Natural killer cell (primary cell): ENCODE measurements at regions of chrX and their contacts with region 1.

Region 1: DNA sequence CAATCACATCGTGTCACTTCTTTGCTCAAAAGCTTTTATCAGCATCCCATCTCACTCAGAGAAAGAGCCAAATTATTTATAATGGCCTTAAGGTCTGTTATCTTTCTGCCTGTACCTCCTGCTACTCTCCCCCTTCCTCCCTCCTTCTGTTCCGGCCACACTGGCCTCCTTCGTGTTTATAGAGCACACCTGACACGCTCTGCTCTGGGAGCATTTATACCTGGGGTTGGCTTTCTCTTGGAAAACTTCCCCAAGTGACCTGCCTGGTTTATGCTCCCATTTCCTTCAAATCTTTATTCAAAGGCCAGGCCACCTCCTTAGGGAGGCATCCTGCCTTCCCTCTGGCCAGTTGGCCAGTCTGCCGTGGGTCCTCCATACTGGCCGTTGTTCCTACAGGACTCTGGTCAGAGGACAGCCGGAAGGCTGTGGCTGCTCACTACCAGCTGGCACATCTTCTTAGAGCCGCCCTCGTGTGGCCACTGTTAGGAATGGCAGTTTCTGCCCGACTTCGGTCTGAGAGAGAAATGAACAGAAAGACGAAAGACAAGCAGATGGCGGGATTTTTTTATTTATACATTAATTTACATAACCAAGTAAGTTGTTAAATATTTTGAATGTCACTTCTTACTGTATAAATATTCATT is 80.2 kb upstream of the CBLL2 start:
- DNase-seq: peak; percentile 19 to 60
- ATAC-seq: peak; percentile 50 to 83 (median 64)
- H3K4me3 ChIP-seq: no peak overlapping the region
- H3K4me3 Mint-ChIP-seq: no peak overlapping the region
- H3K27ac ChIP-seq: no peak overlapping the region
- H3K27ac Mint-ChIP-seq: no peak overlapping the region
- H3K4me1 ChIP-seq: peaks cover 4% of the 10 kb centered on the region
- H3K4me1 Mint-ChIP-seq: peaks cover 5% of the 10 kb centered on the region in 2 donors
- H3K27me3 ChIP-seq: peaks cover 2% of the 10 kb centered on the region
- H3K27me3 Mint-ChIP-seq: peaks cover 3 to 6% of the 10 kb centered on the region in 2 donors
- CTCF ChIP-seq: peak; percentile 63

Region 2: DNA sequence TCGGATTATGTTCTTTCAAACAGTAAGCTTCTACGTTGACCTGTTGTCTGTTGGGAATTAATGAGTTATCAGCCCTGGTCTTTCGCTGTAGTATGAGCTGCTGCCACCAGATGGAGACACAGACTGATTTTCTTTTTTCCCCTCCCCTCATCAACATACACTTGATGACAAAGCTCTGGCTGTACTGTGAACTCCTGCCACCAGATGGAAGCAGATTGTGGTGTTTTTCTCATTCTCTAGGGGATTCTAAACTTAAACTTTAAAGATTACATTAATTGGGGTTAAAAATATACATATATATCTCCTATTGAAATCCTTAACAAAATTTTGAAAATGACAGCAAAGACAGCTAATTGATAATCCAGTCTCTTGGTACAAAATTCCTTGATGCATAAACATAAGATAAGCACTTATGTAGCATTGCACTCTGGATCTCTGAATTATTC is 207.2 kb before region 1 on chrX:
- intact Hi-C with region 1: loop called (anchors 1 kb)
- DNase-seq: peak; percentile 48 to 82
- ATAC-seq: peak; percentile 96 to 100 (median 100)
- H3K4me3 ChIP-seq: no peak overlapping the region
- H3K4me3 Mint-ChIP-seq: no peak overlapping the region
- H3K27ac ChIP-seq: no peak overlapping the region
- H3K27ac Mint-ChIP-seq: peak overlapping the region in 1 of 2 donors; percentile 57
- H3K4me1 ChIP-seq: no peaks in the 10 kb centered on the region
- H3K4me1 Mint-ChIP-seq: no peaks in the 10 kb centered on the region
- H3K27me3 ChIP-seq: no peaks in the 10 kb centered on the region
- H3K27me3 Mint-ChIP-seq: no peaks in the 10 kb centered on the region
- CTCF ChIP-seq: peak; percentile 74

Region 3: DNA sequence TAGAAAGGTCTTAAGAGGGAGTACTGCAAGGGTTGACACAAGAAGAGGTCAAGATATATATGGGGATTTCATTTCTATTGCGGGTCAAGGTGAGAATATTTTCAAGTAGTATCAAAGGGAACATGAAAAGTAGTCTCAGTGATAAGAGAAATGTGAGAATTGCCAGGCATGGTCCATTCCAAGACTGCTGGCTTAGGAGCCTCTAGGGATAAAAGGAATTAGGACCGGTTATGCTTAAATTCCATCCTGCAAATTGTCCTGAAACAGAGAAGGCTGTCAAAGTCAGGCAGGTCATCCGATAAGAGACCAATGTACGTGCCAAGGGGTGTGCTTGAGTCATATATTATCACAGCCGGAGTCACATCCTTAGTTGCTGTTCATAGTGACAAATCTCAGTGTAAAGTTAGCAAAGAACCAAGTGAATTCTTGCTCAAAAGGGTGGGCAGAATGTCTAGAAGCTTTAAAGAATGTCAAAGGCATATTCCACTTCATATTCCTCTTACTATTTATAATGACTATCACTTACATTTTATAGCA is 213.7 kb after region 1 on chrX:
- intact Hi-C with region 1: no loop called
- DNase-seq: no peak
- ATAC-seq: no peak
- H3K4me3 ChIP-seq: no peak overlapping the region
- H3K4me3 Mint-ChIP-seq: no peak overlapping the region
- H3K27ac ChIP-seq: no peak overlapping the region
- H3K27ac Mint-ChIP-seq: no peak overlapping the region
- H3K4me1 ChIP-seq: no peaks in the 10 kb centered on the region
- H3K4me1 Mint-ChIP-seq: no peaks in the 10 kb centered on the region
- H3K27me3 ChIP-seq: no peaks in the 10 kb centered on the region
- H3K27me3 Mint-ChIP-seq: no peaks in the 10 kb centered on the region
- CTCF ChIP-seq: no peak